Dendritic cell treated with granulocyte-macrophage colony-stimulating factor and Interleukin-4, amounts not matched to agents 40 ng/mL and 50 ng/mL, for 4 days (primary cell): ENCODE measurements at regions of chr17 and their contacts with region 1.

Region 1: GRCh38 chr17:45021607-45022287 is 29.7 kb downstream of the DCAKD start:
- H3K4me3 Mint-ChIP-seq: peak overlapping the region; percentile 69
- H3K27ac Mint-ChIP-seq: peak overlapping the region; percentile 46
- H3K4me1 Mint-ChIP-seq: peaks cover 35% of the 10 kb centered on the region
- H3K27me3 Mint-ChIP-seq: peaks cover 43% of the 10 kb centered on the region

Region 2: DNA sequence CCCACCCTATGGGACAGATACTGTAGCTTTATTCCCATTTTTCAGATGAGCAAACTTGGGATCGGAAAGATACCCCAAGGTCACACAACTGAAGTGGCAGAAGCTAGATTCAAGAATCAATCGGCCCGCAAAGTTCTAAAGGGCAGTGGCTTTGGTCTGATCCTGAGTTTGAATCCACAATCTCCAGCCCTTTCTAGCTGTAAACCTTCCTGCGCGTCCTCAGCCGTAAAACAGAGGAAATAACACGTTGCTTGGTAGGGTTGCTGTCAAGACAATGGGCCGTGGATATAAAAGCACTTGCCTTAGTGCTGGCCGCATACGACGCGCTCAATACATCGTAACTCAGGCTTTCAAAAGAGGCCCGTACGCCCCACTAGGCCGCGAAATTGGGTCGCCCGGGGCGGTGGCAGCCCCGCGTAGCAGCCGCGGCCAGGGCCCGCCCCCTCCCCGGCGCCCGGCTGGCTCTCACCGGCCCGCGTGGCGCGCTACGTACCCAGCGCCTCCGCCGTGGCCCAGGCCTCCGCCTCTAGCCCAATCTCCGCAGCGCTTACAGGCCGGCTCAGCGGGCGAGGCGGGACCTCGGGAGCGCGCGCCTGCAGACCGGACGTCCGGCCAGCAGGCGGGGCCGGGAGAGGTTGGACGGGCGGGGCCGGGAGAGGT is 29.4 kb after region 1 on chr17 and contains the start of gene DCAKD:
- intact Hi-C with region 1: no loop called
- H3K4me3 Mint-ChIP-seq: peak within 1 kb of the TSS; percentile 84
- H3K27ac Mint-ChIP-seq: peak within 1 kb of the TSS; percentile 90
- H3K4me1 Mint-ChIP-seq: peaks cover 26% of the 10 kb centered on the region
- H3K27me3 Mint-ChIP-seq: no peaks in the 10 kb centered on the region

Region 3: DNA sequence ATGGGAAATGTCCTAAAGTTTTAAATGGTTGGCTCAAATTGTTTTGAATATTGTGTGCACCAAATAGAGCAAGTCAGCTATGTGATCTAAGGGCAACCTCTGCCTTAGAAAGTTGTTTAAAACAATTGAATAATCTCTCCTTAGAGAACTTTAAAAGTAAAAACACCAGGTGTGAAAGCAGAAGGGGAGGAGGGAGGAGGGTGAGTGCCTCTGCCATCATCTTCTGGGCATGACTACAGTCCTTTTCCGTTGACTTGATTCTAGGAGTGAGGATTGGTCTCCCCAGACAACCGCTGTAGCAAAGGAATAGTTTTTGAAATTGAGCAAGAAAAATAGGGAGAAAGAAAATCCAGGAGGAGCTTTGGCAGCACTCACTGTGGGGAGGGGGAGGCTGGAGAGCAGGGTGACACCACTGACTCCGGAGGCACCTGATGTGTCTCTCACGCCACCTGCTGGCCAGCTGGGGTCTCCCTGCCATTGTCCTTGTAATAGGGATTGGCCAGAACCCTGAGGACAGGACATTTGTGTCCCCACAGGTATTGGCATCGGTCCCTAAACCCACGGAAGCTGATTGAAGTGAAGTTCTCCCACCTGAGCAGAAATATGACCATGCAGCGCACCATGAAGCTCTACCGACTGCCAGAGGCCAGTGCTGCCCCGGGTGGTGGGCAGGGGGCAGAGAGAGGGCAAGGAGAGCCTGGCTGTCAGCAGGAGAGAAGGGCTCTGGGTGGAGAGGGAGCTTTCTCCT is 77.3 kb after region 1 on chr17:
- intact Hi-C with region 1: loop called (anchors 10 kb)
- H3K4me3 Mint-ChIP-seq: no peak overlapping the region
- H3K27ac Mint-ChIP-seq: no peak overlapping the region
- H3K4me1 Mint-ChIP-seq: no peaks in the 10 kb centered on the region
- H3K27me3 Mint-ChIP-seq: no peaks in the 10 kb centered on the region

Region 4: GRCh38 chr17:45235416-45236281 is 213.9 kb after region 1 on chr17:
- intact Hi-C with region 1: no loop called
- H3K4me3 Mint-ChIP-seq: no peak overlapping the region
- H3K27ac Mint-ChIP-seq: peak overlapping the region; percentile 48
- H3K4me1 Mint-ChIP-seq: peaks cover 76% of the 10 kb centered on the region
- H3K27me3 Mint-ChIP-seq: no peaks in the 10 kb centered on the region